ENCODE measurements at regions of chr18 and their contacts with region 1.

Region 1: GRCh38 chr18:9614401-9615279 is at the start of gene PPP4R1:
- DNase-seq: peak; percentile 61 to 83 (median 74)
- H3K4me3 ChIP-seq: peak within 1 kb of the TSS; percentile 62 to 91 (median 81)
- H3K27ac ChIP-seq: peak within 1 kb of the TSS; percentile 83 to 99 (median 95)
- H3K27me3 ChIP-seq: no peaks in the 10 kb centered on the region
- CTCF ChIP-seq: peak in 3 of 56 donors; percentile 6 to 22 (median 12)
- total RNA-seq, gene PPP4R1: 63.4 to 122 (median 88.2) TPM

Region 2: DNA sequence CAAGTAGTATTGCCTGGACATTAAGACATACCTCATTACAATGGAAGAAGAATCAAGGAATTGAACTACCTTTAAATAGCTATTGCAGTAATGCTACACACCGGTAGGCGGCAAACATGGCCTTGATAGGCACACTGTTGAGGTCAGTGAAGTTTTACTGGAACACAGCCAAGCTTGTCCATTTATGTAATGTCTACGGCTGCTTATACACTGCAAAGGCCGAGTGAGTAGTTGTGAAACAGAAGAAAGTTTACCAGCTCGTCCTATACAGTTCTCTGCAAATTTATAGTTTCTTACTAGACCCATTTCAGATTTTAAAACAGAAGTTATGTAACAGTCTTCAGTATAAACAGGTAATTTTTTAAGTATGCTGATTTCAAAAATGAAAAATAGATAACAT is 39.1 kb before region 1 on chr18:
- intact Hi-C with region 1: loop called in 1 of 2 experiments (anchors 5 kb)
- DNase-seq: peak in 4 of 10 donors; percentile 19 to 65 (median 58)
- H3K4me3 ChIP-seq: peak overlapping the region in 1 of 59 donors; percentile 2
- H3K27ac ChIP-seq: peak overlapping the region in 9 of 59 donors; percentile 4 to 50 (median 21)
- H3K27me3 ChIP-seq: no peaks in the 10 kb centered on the region
- CTCF ChIP-seq: peak; percentile 51 to 94 (median 79)

Region 3: GRCh38 chr18:9708057-9708433 is 93.4 kb after region 1 on chr18 and contains the start of gene RAB31:
- intact Hi-C with region 1: loop called in 1 of 2 experiments (anchors 5 kb)
- DNase-seq: peak; percentile 30 to 86 (median 56)
- H3K4me3 ChIP-seq: peak within 1 kb of the TSS; percentile 62 to 86 (median 78)
- H3K27ac ChIP-seq: peak within 1 kb of the TSS; percentile 47 to 97 (median 89)
- H3K27me3 ChIP-seq: no peaks in the 10 kb centered on the region
- CTCF ChIP-seq: peak in 7 of 56 donors; percentile 2 to 44 (median 12)
- total RNA-seq, gene RAB31: 48.3 to 273 (median 87.7) TPM

Region 4: GRCh38 chr18:9913526-9914333 is 299.1 kb after region 1 on chr18 and contains the start of gene VAPA:
- intact Hi-C with region 1: loop called in 1 of 2 experiments (anchors 1 kb)
- DNase-seq: peak; percentile 94 to 98 (median 96)
- H3K4me3 ChIP-seq: peak within 1 kb of the TSS; percentile 67 to 99 (median 92)
- H3K27ac ChIP-seq: peak within 1 kb of the TSS; percentile 87 to 100 (median 98)
- H3K27me3 ChIP-seq: no peaks in the 10 kb centered on the region
- CTCF ChIP-seq: peak in 20 of 56 donors; percentile 2 to 50 (median 16)
- total RNA-seq, gene VAPA: 189 to 323 (median 265) TPM

Measured in dorsolateral prefrontal cortex (tissue), 120 donors.